Pancreas (tissue), 10 donors: ENCODE measurements at regions of chr4 and their contacts with region 1.

Region 1: GRCh38 chr4:71749008-71749594 is 34.8 kb downstream of the GC start:
- DNase-seq: no peak
- ATAC-seq: no peak
- H3K4me3 ChIP-seq: no peak overlapping the region
- H3K27ac ChIP-seq: no peak overlapping the region
- H3K4me1 ChIP-seq: no peaks in the 10 kb centered on the region
- H3K27me3 ChIP-seq: no peaks in the 10 kb centered on the region
- CTCF ChIP-seq: no peak

Region 2: GRCh38 chr4:72286185-72286584 is 537.1 kb after region 1 on chr4:
- intact Hi-C with region 1: loop called in 1 of 3 experiments (anchors 10 kb)
- DNase-seq: no peak
- ATAC-seq: no peak
- H3K4me3 ChIP-seq: no peak overlapping the region
- H3K27ac ChIP-seq: no peak overlapping the region
- H3K4me1 ChIP-seq: no peaks in the 10 kb centered on the region
- H3K27me3 ChIP-seq: no peaks in the 10 kb centered on the region
- CTCF ChIP-seq: no peak

Region 3: DNA sequence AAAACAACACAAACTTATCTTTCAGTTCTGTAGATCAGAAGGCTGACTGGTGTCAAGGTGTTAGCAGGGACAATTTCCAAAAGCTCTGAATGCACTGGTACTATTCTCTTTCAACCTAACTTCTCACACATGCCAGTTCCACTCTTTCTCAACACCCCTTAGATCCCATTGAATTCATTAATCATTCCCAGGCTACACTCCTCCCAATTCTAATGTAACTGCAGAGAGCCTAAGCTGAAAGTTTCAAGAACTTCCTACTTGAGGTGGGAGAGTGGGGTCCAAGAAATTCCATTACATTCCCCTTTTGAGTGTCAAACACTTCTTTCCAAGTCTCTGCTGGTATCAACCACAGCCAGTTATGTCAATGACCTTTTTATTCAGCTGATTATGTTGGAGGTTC is 678.0 kb after region 1 on chr4:
- intact Hi-C with region 1: no loop called
- DNase-seq: no peak
- ATAC-seq: no peak
- H3K4me3 ChIP-seq: no peak overlapping the region
- H3K27ac ChIP-seq: no peak overlapping the region
- H3K4me1 ChIP-seq: no peaks in the 10 kb centered on the region
- H3K27me3 ChIP-seq: no peaks in the 10 kb centered on the region
- CTCF ChIP-seq: no peak